ENCODE measurements at regions of chrX and their contacts with region 1.

Region 1: DNA sequence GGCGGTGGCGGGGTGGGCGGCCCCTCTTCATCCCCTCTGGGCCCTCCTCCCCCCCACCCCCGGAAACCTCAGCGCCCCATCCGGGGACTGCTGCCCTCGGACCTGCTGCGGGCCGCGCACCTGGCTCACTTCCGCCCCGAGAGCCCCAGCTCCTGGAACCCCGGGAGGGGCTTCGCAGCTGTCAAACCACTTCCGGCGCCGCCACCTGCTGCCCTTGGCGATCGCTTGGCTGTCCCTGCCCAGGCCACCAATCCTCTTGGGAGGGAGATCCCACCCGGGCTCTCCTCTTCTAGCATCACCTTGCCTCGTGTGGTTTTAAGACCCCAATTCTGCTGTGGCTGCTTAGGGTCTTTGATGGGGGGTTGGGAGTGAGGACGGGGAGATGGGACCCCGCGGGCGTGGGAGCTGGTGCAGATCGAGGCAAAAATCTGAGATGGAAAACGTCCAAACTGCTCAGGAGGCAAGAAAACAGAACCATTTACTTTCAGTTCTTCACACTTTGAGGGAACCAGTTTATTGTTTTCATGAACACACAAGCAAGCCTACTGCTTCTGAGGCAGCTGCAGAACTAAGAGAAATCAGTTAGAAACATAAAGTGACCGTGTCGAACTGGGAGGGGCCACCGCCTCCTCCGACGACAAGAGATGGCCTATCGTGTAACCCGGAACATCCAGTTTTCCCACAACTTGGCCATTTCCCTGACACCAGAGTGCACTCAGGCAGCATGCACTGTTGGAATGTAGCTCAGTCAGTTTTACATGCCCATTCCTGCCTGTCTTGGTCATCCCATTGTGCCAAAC is 779 bp downstream of the MTMR1 start:
- DNase-seq: peak; percentile 83
- H3K4me3 Mint-ChIP-seq: peak overlapping the region; percentile 88
- H3K27ac Mint-ChIP-seq: peak overlapping the region; percentile 100
- H3K4me1 Mint-ChIP-seq: peaks cover 67% of the 10 kb centered on the region
- H3K27me3 Mint-ChIP-seq: no peaks in the 10 kb centered on the region

Region 2: GRCh38 chrX:150587585-150588503 is 106.1 kb before region 1 on chrX:
- CTCF ChIA-PET with region 1: no interaction called
- POLR2A ChIA-PET with region 1: no interaction called
- DNase-seq: peak; percentile 31
- H3K4me3 Mint-ChIP-seq: no peak overlapping the region
- H3K27ac Mint-ChIP-seq: no peak overlapping the region
- H3K4me1 Mint-ChIP-seq: peaks cover 13% of the 10 kb centered on the region
- H3K27me3 Mint-ChIP-seq: no peaks in the 10 kb centered on the region

Region 3: GRCh38 chrX:150704030-150704613 is 10.1 kb after region 1 on chrX:
- CTCF ChIA-PET with region 1: interaction called, 7 read pairs
- POLR2A ChIA-PET with region 1: interaction called, 15 read pairs
- DNase-seq: no peak
- H3K4me3 Mint-ChIP-seq: no peak overlapping the region
- H3K27ac Mint-ChIP-seq: no peak overlapping the region
- H3K4me1 Mint-ChIP-seq: peaks cover 26% of the 10 kb centered on the region
- H3K27me3 Mint-ChIP-seq: no peaks in the 10 kb centered on the region

Region 4: GRCh38 chrX:150774798-150775568 is 81.0 kb after region 1 on chrX:
- CTCF ChIA-PET with region 1: no interaction called
- POLR2A ChIA-PET with region 1: no interaction called
- DNase-seq: no peak
- H3K4me3 Mint-ChIP-seq: no peak overlapping the region
- H3K27ac Mint-ChIP-seq: no peak overlapping the region
- H3K4me1 Mint-ChIP-seq: peaks cover 11% of the 10 kb centered on the region
- H3K27me3 Mint-ChIP-seq: no peaks in the 10 kb centered on the region

Region 5: DNA sequence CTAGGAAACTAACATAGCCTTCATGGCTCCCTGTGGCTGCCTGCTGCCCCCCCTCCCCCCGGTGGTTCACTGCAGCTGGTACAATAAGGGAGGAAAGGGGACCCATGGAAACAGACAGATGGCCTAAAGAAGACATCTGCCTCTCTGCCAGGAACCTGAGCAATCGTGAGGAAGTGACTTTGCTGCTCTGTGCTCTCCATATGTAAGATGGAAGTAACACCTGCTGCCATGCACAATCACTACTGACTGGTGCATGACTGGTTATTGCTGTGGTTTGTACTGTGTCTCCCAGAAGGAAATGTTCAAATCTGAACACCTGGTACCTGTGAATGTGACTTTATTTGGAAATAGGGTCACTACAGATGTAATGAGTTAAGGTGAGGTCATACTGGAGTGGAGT is 160.9 kb after region 1 on chrX:
- CTCF ChIA-PET with region 1: no interaction called
- POLR2A ChIA-PET with region 1: no interaction called
- DNase-seq: no peak
- H3K4me3 Mint-ChIP-seq: no peak overlapping the region
- H3K27ac Mint-ChIP-seq: no peak overlapping the region
- H3K4me1 Mint-ChIP-seq: peaks cover 3% of the 10 kb centered on the region
- H3K27me3 Mint-ChIP-seq: no peaks in the 10 kb centered on the region

Measured in activated CD4-positive, alpha-beta memory T cell treated with anti-CD3 and anti-CD28 coated beads, Interleukin-2, amount 10 ng/mL, durations not matched to agents 7 days and 5 days (primary cell).